BJ (cell line): ENCODE measurements at regions of chr9 and their contacts with region 1.

Region 1: DNA sequence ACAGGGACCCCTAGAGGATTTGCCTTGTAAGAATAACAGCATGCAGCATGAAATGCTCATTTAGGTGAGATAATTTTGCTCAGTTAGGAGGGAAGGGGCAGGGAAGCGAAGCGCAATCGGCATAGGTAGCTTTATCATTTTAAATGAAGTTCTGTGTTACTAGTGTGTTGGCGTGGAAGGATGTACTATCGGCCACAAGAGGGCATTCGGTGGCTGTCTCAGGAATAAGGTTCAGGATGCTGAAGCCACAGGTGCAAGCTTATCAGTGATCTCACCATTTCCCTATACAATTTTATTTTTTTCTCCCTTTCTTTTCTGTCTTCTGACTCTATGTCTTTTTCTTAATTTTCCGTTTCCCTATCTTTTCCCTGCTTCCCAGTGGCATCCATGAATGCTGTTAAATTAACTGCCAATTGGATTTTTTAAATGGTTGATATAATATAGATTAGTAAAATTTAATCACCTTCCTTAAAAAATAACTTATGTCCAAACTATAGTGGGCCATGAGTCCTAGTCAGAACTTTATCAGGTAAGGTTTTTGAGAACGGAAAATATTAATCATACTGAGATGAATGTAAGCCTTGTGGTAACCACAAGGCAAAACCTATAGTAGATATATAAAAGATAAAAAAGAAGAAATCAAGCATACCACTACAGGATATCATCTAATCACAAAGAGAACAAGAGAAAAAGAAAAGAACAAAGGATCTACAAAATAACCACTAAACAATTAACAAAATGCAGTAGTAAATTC is 1.2 kb upstream of the INSL6 start:
- DNase-seq: peak; percentile 3
- H3K4me3 ChIP-seq: no peak overlapping the region
- H3K27me3 ChIP-seq: no peaks in the 10 kb centered on the region
- CTCF ChIP-seq: peak; percentile 80

Region 2: DNA sequence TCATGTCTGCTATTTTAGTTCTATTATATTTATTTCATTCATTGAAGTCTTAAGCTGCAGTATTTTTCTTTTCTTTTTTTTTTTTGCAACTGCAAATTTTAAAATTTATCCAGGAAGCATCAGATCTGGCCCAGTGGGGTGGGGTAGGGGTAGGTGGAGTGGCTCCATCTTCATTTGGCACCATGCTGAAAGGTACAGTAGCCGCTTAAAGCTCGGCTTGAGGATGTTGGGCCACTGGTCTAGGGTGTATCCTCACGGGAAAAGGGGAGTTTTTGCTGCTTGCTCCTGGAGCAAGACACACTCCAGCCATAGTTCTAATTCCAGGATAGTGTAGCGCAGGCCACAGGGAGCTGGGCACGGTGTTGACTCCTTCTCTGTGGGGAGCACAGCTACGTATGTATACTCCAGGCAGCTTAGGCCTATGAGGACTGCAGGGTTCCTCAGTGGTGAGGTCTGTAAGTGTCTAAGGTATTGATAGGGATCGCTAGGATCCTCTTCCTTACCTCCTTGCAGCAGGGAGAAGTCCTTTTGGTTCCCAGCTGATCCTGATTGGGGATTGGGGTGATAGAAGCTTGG is 371.1 kb before region 1 on chr9:
- CTCF ChIA-PET with region 1: no interaction called
- POLR2A ChIA-PET with region 1: no interaction called
- DNase-seq: no peak
- H3K4me3 ChIP-seq: no peak overlapping the region
- H3K27me3 ChIP-seq: no peaks in the 10 kb centered on the region
- CTCF ChIP-seq: no peak

Region 3: DNA sequence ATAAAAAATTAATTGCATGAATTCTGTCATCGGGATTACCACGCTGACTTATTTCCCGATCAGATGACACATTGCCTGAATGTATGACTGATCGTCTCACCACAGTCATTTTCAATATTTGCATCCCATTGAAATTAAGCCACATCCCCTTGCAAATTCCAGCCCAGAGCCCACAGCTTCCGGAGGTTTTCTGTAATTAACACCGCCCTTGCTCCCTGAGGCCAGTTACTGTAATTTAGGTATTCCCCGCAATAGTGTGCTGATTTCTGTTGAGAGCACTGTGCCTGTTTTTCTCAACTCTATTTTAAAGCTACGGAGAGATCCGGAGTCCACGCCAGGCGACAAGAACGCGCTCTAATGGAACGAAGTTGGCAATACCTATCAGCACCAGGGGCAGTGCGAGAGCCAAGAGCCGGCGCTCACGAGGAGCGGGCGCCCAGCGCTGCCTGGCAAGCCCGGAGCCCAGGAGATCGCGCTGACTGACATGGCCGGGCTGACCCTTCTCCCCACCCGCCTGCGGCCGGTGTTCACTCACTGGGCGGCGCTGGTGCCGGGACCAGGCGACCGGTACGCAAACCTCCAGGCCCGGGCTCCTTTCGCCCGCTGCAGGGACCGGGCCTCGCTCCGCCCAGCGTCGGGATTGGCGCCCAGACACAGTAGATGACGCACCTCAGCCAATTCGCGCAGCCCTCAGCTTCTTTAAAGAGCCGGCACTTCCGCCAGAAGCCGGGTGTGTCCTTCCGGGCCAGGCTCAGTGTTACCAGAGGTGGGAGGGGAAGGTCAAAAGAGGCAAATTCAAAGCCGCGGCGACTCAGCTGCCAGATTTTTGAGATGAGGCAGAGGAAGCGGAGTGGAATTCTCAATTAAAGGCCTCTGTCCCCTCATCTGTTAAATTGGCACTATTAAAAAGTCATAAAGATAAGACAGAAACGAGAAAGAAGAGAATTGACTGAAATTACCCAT is 250.9 kb after region 1 on chr9 and contains the start of gene PLGRKT:
- CTCF ChIA-PET with region 1: interaction called, 22 read pairs
- POLR2A ChIA-PET with region 1: no interaction called
- DNase-seq: peak; percentile 62
- H3K4me3 ChIP-seq: peak within 1 kb of the TSS; percentile 64
- H3K27me3 ChIP-seq: no peaks in the 10 kb centered on the region
- CTCF ChIP-seq: no peak; the same call in none of the 2 replicates
- polyA plus RNA-seq, gene PLGRKT: 7.7 and 14.2 TPM in 2 replicates

Region 4: GRCh38 chr9:5593904-5594303 is 407.3 kb after region 1 on chr9:
- CTCF ChIA-PET with region 1: interaction called, 42 read pairs
- POLR2A ChIA-PET with region 1: no interaction called
- DNase-seq: no peak
- H3K4me3 ChIP-seq: no peak overlapping the region
- H3K27me3 ChIP-seq: no peaks in the 10 kb centered on the region
- CTCF ChIP-seq: no peak